AG04450 (cell line): ENCODE measurements at regions of chr12 and their contacts with region 1.

Region 1: DNA sequence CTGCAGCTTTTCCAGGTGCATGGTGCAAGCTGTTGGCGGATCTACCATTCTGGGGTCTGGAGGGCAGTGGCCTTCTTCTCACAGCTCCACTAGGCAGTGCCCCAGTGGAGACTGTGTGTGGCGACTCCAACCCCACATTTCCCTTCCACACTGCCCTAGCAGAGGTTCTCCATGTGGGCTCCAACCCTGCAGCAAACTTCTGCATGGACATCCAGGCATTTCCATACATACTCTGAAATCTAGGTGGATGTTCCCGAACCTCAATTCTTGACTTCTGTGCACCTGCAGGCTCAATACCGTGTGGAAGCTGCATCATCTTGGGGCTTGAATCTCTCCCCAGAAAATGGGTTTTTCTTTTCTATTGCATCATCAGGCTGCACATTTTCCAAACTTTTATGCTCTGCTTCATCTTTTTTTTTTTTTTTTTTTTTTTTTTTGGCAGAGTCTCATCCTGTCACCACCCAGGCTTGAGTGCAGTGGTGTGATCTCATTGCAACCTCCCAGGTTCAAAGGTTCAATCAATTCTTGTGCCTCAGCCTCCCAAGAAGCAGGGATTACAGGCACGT is 160.1 kb upstream of the DYRK2 start:
- DNase-seq: no peak
- H3K4me3 ChIP-seq: no peak overlapping the region
- H3K27ac ChIP-seq: no peak overlapping the region
- H3K27me3 ChIP-seq: no peaks in the 10 kb centered on the region
- CTCF ChIP-seq: no peak

Region 2: DNA sequence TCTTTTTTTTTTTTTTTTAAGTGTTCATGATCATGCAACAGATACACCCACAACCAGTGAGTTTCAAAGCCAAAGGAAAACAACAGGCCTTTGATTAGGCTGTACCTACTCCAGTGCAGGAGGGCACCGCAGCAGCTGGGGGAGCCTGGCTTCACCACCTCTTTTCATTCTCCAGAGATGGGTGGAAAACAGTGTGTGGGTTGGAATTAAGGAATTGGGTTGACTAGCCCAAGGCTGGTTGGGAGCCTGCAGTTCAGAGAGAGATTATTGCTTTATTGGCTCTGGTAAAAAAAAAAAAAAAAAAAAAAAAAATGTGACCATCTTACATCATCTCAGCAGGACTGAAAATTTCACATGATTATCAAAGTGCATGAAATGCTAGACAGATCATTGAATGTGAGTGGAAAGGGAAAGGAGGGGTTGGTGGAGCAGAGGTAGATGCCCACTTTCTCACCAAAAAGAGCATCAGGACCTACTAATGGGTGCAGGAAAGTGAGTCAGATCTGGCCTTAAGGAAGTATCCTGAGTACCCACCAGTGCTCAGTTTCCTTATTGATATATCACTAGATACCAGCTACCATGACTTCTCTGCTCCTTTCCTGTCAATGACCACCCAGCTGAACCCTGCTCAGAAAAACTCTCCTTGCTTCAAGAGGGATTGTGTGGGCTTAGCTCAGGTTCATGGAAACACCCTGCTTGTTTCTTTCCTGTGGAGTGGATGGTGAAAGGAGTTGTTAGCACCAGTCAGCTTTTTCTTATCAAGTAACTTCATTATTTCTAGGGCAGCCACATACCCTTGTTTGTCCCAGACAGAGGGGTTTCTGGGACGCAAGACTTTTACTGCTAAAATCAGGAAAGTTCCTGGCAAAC is 105.3 kb after region 1 on chr12:
- CTCF ChIA-PET with region 1: interaction called, 12 read pairs
- POLR2A ChIA-PET with region 1: no interaction called
- DNase-seq: no peak
- H3K4me3 ChIP-seq: no peak overlapping the region
- H3K27ac ChIP-seq: no peak overlapping the region
- H3K27me3 ChIP-seq: no peaks in the 10 kb centered on the region
- CTCF ChIP-seq: no peak